Aorta (tissue), 5 donors: ENCODE measurements at regions of chr9 and their contacts with region 1.

Region 1: DNA sequence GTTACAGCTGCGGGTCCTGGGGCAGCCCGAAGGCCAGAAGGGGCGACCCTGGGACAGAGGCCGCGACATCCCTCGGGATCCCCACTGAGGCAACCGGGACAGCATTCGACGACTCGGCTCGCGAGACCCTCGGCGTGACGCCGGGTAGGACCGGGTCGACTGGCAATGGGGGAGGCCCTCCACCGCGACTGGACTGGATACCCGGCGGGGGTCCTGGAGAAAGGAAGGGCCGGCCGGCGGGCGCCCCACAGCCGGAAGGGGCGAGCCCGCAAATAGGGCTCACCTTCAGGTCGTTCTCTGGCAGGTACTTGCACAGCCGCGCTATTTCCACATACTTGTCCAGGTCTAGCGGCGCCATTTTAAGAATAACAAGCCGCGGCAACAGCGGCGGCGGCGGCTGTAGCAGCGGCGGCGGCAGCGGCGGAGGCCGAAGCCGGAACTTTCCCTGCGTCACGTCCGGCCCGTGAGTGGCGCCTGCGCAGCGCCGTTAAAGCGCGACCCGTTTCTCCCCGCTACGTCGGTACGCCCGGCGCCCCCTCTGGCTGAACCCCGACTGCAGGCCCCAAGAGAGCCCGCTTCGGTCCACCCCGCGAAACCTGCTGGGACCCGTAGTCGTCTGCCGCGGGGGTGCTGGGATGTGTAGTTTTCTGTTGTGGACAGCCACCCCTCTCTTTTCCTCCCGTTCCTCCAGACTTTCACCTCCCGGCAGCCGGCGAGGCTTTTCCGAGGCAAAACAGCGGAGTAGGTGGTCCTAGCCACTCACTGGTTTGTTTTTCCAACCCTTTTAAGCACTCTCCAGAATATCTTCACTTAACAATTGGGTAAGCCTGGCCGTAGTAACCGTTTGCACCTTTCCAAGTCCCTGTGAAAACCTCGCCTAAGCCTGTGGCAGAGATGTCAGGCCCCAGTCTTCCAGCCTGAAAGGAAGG is at the start of gene PPP6C:
- DNase-seq: peak; percentile 99 to 100
- ATAC-seq: peak; percentile 99
- H3K4me3 ChIP-seq: peak within 1 kb of the TSS; percentile 81 to 84
- H3K27ac ChIP-seq: peak within 1 kb of the TSS; percentile 84 to 90
- H3K4me1 ChIP-seq: no peaks in the 10 kb centered on the region
- H3K27me3 ChIP-seq: no peaks in the 10 kb centered on the region
- total RNA-seq, gene PPP6C: 36.0 to 47.0 TPM

Region 2: GRCh38 chr9:125143375-125144090 is 46.1 kb before region 1 on chr9 and contains the start of gene SCAI:
- intact Hi-C with region 1: loop called in 1 of 2 experiments (anchors 10 kb)
- DNase-seq: peak; percentile 99 to 100
- ATAC-seq: peak; percentile 100
- H3K4me3 ChIP-seq: peak within 1 kb of the TSS; percentile 74 to 88
- H3K27ac ChIP-seq: no peak within 1 kb of the TSS
- H3K4me1 ChIP-seq: no peaks in the 10 kb centered on the region
- H3K27me3 ChIP-seq: no peaks in the 10 kb centered on the region
- total RNA-seq, gene SCAI: 7.9 to 13.9 TPM

Region 3: GRCh38 chr9:125166762-125167161 is 22.9 kb before region 1 on chr9:
- intact Hi-C with region 1: loop called in 1 of 2 experiments (anchors 2 kb)
- DNase-seq: no peak
- ATAC-seq: no peak
- H3K4me3 ChIP-seq: no peak overlapping the region
- H3K27ac ChIP-seq: peak overlapping the region in 1 of 2 donors; percentile 71
- H3K4me1 ChIP-seq: peaks cover 0 to 3% of the 10 kb centered on the region in 2 donors
- H3K27me3 ChIP-seq: no peaks in the 10 kb centered on the region

Region 4: GRCh38 chr9:125272697-125273096 is 83.1 kb after region 1 on chr9:
- intact Hi-C with region 1: no loop called
- DNase-seq: no peak
- ATAC-seq: no peak
- H3K4me3 ChIP-seq: no peak overlapping the region
- H3K27ac ChIP-seq: no peak overlapping the region
- H3K4me1 ChIP-seq: peaks cover 2 to 3% of the 10 kb centered on the region in 2 donors
- H3K27me3 ChIP-seq: no peaks in the 10 kb centered on the region